ENCODE measurements at regions of chr13 and their contacts with region 1.

Region 1: DNA sequence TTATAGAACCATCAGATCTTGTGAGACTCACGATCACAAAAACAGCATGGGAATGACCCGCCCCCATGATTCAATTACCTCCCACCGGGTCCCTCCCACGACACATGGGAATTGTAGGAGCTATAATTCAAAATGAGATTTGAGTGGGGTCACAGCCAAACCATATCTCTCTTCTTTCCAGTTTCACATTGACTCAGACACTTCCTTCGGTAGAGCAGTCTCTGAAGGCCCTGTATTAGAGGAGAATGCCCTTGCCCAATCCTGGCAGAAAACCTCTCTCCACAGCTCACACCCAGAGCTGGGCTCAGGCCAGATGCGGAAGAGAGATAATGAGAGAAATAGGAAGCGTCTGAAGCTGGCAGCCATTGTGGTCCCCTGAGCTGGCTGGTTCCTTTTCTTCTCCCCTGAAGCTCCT is 72.4 kb upstream of the CLDN10 start:
- DNase-seq: peak; percentile 10
- CTCF ChIP-seq: no peak

Region 2: GRCh38 chr13:95378603-95379002 is 101.5 kb before region 1 on chr13:
- CTCF ChIA-PET with region 1: interaction called, 12 read pairs
- POLR2A ChIA-PET with region 1: no interaction called
- DNase-seq: no peak
- CTCF ChIP-seq: no peak

Region 3: DNA sequence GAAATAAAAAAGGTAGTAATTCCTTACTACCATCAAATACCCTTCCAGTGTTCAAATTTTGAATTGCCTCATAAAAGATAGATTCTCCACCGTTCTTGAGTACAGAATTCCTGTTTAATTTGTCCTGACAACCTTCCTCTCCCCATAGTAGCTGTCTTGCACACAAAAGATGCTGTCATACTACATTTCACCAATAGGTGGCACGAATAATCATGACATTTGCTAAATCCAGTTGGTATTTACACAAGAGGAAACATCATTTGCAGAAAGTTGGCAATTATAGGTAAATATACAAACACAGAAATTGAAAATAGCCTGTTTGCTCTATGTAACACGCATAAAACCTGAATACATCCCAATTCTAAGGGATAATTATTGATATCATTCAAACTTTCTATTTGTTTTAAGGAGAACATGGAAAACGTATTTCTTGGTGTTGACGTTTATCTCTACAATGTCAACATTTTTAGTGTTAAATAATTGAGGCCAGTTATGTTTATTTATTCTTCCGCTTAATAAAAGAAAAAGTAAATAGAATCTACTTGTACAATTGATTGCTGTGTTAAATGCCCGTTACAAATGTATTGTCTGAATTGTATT is 14.0 kb after region 1 on chr13:
- CTCF ChIA-PET with region 1: interaction called, 21 read pairs
- POLR2A ChIA-PET with region 1: no interaction called
- DNase-seq: peak; percentile 66
- CTCF ChIP-seq: peak; percentile 72

Region 4: GRCh38 chr13:95552539-95553441 is 72.7 kb after region 1 on chr13 and contains the start of gene CLDN10:
- CTCF ChIA-PET with region 1: no interaction called
- POLR2A ChIA-PET with region 1: no interaction called
- DNase-seq: peak; percentile 29
- CTCF ChIP-seq: no peak

Region 5: DNA sequence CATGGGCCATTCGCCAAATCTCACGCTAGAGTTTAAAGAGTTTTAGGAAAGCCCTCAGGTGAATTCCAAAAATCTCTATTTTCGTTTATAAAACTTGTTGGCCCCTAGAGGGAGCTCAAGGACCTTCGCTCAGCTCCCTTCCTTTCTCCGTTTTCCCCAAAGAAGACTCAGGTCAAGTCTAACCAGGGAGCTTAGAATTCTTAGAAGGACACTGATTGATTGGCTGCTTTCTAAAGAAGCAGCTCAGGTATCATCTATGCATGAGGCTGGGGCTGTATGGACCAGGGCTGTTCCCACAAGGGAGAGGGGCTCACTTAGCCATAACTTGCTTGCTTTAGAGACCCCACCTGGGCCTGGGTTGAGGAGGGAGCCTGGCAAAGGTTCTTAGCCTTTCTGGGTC is 143.9 kb after region 1 on chr13:
- CTCF ChIA-PET with region 1: no interaction called
- POLR2A ChIA-PET with region 1: no interaction called
- DNase-seq: peak; percentile 39
- CTCF ChIP-seq: peak; percentile 42